Astrocyte of the cerebellum (primary cell): ENCODE measurements at regions of chr17 and their contacts with region 1.

Region 1: GRCh38 chr17:19362277-19363113 is at the start of gene B9D1:
- DNase-seq: peak; percentile 69
- H3K4me3 ChIP-seq: peak within 1 kb of the TSS; percentile 69
- CTCF ChIP-seq: peak; percentile 68

Region 2: DNA sequence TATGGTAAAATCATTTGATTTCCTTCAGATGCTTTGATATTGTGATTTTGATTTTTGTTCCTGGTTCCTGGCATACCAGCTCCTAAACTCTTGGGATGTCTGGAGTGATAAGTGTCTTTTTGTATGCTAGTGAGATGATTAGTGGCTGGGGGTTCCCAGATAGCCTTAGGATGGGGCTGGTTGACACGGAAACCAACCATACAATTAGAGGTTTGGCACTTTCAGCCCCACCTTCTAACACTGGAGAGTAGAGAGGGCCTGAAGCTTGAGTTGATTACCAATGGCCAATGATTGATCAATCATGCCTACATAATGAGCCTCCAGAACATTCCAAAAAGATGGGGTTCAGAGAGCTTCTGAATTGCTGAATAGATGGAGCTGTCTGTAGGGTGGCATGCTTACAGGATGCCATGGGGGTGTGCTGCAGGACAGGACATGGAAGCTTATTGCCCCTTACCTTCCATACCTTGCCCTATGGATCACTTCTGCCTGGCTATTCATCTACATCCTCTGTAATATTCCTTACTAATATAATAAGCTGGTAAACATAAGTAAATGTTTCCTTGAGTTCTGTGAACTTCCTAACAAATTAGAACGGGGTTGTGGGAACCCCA is 71.3 kb after region 1 on chr17:
- in situ Hi-C with region 1: loop called (anchors 5 kb)
- DNase-seq: no peak
- H3K4me3 ChIP-seq: no peak overlapping the region
- CTCF ChIP-seq: no peak

Region 3: GRCh38 chr17:19457830-19458271 is 95.4 kb after region 1 on chr17:
- in situ Hi-C with region 1: loop called (anchors 5 kb)
- DNase-seq: no peak
- H3K4me3 ChIP-seq: no peak overlapping the region
- CTCF ChIP-seq: no peak

Region 4: GRCh38 chr17:19517699-19518098 is 155.2 kb after region 1 on chr17:
- in situ Hi-C with region 1: loop called (anchors 10 kb)
- DNase-seq: no peak
- H3K4me3 ChIP-seq: no peak overlapping the region
- CTCF ChIP-seq: no peak

Region 5: GRCh38 chr17:19762515-19762961 is 400.0 kb after region 1 on chr17:
- in situ Hi-C with region 1: loop called (anchors 5 kb)
- DNase-seq: no peak
- H3K4me3 ChIP-seq: no peak overlapping the region
- CTCF ChIP-seq: peak; percentile 69